ENCODE measurements at regions of chr7 and their contacts with region 1.

Region 1: GRCh38 chr7:73978661-73979563 is 49.1 kb upstream of the ELN start:
- DNase-seq: peak; percentile 47
- ATAC-seq: peak; percentile 99
- H3K4me3 ChIP-seq: no peak overlapping the region
- H3K27ac ChIP-seq: no peak overlapping the region
- H3K4me1 ChIP-seq: peaks cover 9 to 16% of the 10 kb centered on the region in 2 experiments
- H3K27me3 ChIP-seq: no peaks in the 10 kb centered on the region
- CTCF ChIP-seq: peak; percentile 71 to 83 (median 75)
- POLR2A ChIP-seq: no peak
- RAD21 ChIP-seq: peak; percentile 77

Region 2: GRCh38 chr7:73865738-73866445 is 113.0 kb before region 1 on chr7:
- CTCF ChIA-PET with region 1: no interaction called
- POLR2A ChIA-PET with region 1: no interaction called
- RAD21 ChIA-PET with region 1: no interaction called
- intact Hi-C with region 1: loop called (anchors 1 kb)
- DNase-seq: no peak
- ATAC-seq: peak; percentile 88
- H3K4me3 ChIP-seq: no peak overlapping the region
- H3K27ac ChIP-seq: no peak overlapping the region
- H3K4me1 ChIP-seq: no peaks in the 10 kb centered on the region
- H3K27me3 ChIP-seq: no peaks in the 10 kb centered on the region
- CTCF ChIP-seq: peak; percentile 70 to 75 (median 73); a peak in 5 of 6 replicates
- POLR2A ChIP-seq: no peak
- RAD21 ChIP-seq: peak; percentile 91

Region 3: DNA sequence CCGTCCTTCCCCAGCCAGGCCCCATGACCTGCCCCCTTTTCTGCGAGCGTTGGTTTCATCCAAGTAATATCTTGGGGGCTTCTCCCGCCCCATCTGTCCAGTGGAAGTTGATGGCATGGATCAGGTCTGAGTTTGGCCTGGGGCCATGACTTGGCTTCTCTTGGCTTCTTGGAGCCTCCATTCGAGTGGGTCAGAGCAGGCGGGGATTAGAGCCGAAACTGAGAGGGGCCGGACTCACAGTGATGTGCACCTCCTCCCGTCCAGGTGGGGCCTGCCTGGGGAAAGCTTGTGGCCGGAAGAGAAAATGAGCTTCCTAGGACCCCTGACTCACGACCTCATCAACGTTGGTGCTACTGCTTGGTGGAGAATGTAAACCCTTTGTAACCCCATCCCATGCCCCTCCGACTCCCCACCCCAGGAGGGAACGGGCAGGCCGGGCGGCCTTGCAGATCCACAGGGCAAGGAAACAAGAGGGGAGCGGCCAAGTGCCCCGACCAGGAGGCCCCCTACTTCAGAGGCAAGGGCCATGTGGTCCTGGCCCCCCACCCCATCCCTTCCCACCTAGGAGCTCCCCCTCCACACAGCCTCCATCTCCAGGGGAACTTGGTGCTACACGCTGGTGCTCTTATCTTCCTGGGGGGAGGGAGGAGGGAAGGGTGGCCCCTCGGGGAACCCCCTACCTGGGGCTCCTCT is 89.6 kb after region 1 on chr7:
- CTCF ChIA-PET with region 1: no interaction called
- POLR2A ChIA-PET with region 1: no interaction called
- RAD21 ChIA-PET with region 1: no interaction called
- intact Hi-C with region 1: no loop called
- DNase-seq: no peak
- ATAC-seq: no peak
- H3K4me3 ChIP-seq: no peak overlapping the region
- H3K27ac ChIP-seq: no peak overlapping the region
- H3K4me1 ChIP-seq: peaks cover 5 to 17% of the 10 kb centered on the region in 2 experiments
- H3K27me3 ChIP-seq: no peaks in the 10 kb centered on the region
- CTCF ChIP-seq: no peak
- POLR2A ChIP-seq: no peak
- RAD21 ChIP-seq: no peak

Region 4: DNA sequence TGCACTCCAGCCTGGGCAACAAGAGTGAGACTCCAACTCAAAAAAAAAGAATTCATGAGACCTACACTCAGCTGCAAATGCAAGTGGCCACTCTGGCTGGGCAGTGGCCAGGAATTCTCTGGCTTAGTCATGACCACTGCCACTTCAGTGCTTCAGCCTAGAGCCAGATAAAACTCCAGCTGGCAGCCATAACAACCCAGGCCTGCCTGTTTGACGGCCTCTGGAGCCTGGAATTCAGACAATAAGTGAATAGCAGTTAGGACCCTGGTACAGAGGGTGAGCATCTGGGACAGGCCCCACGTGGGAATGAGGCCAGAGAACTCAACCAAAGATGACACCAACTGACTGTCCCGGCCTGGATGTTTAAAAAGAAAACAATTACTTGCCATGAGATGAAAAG is 1075.8 kb after region 1 on chr7:
- CTCF ChIA-PET with region 1: no interaction called
- POLR2A ChIA-PET with region 1: no interaction called
- RAD21 ChIA-PET with region 1: no interaction called
- intact Hi-C with region 1: no loop called
- DNase-seq: no peak
- ATAC-seq: no peak
- H3K4me3 ChIP-seq: no peak overlapping the region
- H3K27ac ChIP-seq: no peak overlapping the region
- H3K4me1 ChIP-seq: no peaks in the 10 kb centered on the region
- H3K27me3 ChIP-seq: no peaks in the 10 kb centered on the region
- CTCF ChIP-seq: no peak
- POLR2A ChIP-seq: no peak
- RAD21 ChIP-seq: no peak

Measured in HCT116 (cell line).